ENCODE measurements at regions of chr16 and their contacts with region 1.

Region 1: GRCh38 chr16:27449434-27450195 is 47.6 kb downstream of the IL21R start:
- DNase-seq: peak; percentile 88 to 97 (median 96)
- H3K4me3 ChIP-seq: peak overlapping the region in 3 of 7 experiments; percentile 22 to 58 (median 32)
- H3K27ac ChIP-seq: no peak overlapping the region
- H3K4me1 ChIP-seq: peaks cover 0 to 45% (median 39%) of the 10 kb centered on the region in 4 experiments
- H3K27me3 ChIP-seq: no peaks in the 10 kb centered on the region

Region 2: GRCh38 chr16:27374804-27375425 is 74.7 kb before region 1 on chr16:
- CTCF ChIA-PET with region 1: interaction called, 11 read pairs
- POLR2A ChIA-PET with region 1: no interaction called
- DNase-seq: peak; percentile 76 to 86 (median 81)
- H3K4me3 ChIP-seq: peak overlapping the region in 1 of 7 experiments; percentile 6
- H3K27ac ChIP-seq: no peak overlapping the region
- H3K4me1 ChIP-seq: peaks cover 2 to 60% (median 46%) of the 10 kb centered on the region in 4 experiments
- H3K27me3 ChIP-seq: no peaks in the 10 kb centered on the region

Region 3: DNA sequence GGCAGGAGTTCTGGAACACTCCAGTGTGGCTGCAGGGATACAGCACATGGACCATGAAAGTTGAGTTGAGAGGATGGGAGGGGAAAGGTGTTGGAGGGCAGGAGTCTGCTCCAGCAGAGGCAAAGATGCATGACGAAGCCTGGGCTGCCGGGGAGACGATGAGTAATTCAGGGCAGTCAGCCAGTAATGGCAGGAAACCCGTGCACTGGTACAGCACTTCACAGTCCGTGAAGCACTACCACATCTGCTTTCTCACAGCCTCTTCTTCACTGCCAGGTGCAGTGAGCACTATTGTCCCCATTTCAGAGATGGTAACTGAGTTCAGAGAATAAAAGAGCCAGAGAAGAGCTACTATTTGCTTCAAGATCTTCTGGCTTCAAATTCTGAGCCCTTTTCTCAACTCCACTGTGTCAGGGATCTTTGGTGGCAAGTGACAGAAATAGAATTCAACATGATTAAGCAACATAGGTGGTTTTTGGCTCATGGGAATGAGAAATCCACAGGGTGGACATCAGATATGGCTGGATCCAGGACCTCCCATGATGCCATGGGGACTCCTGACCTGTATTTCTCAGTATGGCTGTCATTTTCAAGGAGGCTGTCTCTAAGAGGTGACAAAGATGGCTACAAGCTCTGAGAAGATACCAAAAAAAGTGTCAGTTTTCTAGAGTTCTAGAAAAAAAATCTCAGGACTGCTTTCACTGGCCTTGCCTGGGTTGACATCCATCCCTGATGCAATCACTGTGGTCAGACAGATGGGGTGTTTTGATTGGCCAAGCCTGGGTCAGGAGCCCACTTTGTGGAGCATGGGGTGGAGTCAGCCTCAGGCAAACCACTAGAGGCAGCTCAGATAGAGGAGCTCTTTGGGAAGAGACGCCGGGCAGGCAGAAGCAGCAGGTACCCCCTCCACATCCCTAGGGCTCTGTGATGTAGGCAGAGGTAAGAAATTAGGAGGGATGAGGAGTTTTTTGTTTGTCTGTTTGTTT is 22.9 kb before region 1 on chr16:
- CTCF ChIA-PET with region 1: interaction called, 91 read pairs
- POLR2A ChIA-PET with region 1: interaction called, 14 read pairs
- DNase-seq: peak; percentile 65 to 95 (median 92)
- H3K4me3 ChIP-seq: peak overlapping the region in 1 of 7 experiments; percentile 25
- H3K27ac ChIP-seq: no peak overlapping the region
- H3K4me1 ChIP-seq: peaks cover 4 to 48% (median 26%) of the 10 kb centered on the region in 4 experiments
- H3K27me3 ChIP-seq: no peaks in the 10 kb centered on the region

Region 4: DNA sequence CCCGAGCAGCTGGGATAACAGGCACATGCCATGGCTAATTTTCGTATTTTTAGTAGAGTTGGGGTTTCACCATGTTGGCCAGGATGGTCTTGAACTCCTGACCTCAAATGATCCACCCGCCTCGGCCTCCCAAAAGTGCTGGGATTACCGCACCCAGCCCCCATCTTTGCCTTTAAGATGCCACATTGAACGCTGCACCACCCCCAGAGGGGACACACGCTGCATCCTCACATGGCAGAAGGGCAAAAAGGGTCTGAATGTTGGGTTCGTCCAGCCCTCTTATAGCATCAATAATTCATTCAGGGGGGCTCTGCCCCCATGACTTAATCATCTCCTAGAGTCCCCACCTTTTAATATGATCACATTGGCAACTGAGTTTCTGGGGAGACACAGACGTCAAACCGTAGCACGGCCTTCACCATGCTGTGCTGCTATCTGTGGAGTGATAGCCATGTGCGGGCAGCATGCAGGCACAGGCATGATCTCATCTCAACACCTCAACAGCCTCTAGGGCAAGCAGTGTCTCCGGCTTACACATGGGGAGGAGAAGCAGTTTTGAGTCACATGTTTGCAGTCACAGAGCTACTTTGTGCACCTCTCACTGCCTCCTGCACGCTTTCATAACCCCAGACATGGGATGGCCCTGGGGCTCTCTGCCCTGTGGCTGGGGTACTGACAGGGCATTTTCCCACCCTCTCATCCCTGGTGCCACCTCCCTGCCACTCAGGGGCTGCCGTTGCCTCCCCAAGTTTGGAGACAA is 17.7 kb before region 1 on chr16:
- CTCF ChIA-PET with region 1: interaction called, 91 read pairs
- POLR2A ChIA-PET with region 1: interaction called, 14 read pairs
- DNase-seq: peak in 1 of 3 donors; percentile 50
- H3K4me3 ChIP-seq: no peak overlapping the region
- H3K27ac ChIP-seq: no peak overlapping the region
- H3K4me1 ChIP-seq: peaks cover 2 to 65% (median 42%) of the 10 kb centered on the region in 4 experiments
- H3K27me3 ChIP-seq: peaks cover 0 to 2% (median 0%) of the 10 kb centered on the region in 5 experiments

Region 5: DNA sequence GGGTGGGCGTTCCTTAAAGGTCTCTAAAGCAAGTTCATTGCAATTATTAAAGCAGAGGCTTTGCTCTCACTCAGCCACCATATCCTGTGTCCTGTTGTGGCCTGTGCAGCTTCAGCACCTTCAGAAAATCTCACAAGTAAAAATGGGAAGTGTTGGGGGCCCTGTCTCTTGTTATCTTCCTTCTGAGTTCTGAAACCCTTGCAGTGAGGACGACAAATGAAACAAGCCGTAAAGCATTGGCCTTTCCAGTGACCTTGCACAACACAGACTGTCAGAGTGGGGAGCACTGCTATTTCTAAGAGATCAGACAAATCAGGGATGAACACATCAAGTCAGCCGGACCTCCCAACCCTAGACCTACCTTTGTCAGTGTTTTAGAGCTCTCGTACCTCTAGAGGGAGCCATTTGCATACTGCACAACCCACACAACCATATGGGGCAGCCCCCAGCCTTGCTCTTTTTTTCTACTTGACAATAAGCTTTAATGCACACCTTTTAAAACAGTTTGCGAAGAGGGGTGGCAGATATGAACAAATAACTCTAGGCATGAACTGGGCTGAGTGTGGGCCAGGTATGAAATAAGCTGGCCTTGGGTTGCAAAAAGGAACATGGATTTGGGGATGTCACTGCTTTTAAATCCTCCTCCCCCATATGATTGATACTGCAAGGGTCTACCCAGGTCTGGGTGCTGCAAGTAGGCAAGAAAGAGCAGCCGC is 190.1 kb after region 1 on chr16:
- CTCF ChIA-PET with region 1: no interaction called
- POLR2A ChIA-PET with region 1: no interaction called
- DNase-seq: peak; percentile 29 to 57 (median 51)
- H3K4me3 ChIP-seq: no peak overlapping the region
- H3K27ac ChIP-seq: no peak overlapping the region
- H3K4me1 ChIP-seq: peaks cover 0 to 14% (median 2%) of the 10 kb centered on the region in 4 experiments
- H3K27me3 ChIP-seq: no peaks in the 10 kb centered on the region

Measured in common myeloid progenitor, CD34-positive (primary cell).